ENCODE measurements at regions of chr14 and their contacts with region 1.

Region 1: GRCh38 chr14:22556990-22557623 is 31.9 kb downstream of the DAD1 start:
- DNase-seq: peak; percentile 83 to 93
- ATAC-seq: peak; percentile 89 to 97 (median 94)
- H3K4me3 ChIP-seq: peak overlapping the region; percentile 53
- H3K27ac ChIP-seq: peak overlapping the region; percentile 13
- H3K4me1 ChIP-seq: peaks cover 8% of the 10 kb centered on the region
- H3K27me3 ChIP-seq: no peaks in the 10 kb centered on the region
- CTCF ChIP-seq: peak; percentile 97

Region 2: DNA sequence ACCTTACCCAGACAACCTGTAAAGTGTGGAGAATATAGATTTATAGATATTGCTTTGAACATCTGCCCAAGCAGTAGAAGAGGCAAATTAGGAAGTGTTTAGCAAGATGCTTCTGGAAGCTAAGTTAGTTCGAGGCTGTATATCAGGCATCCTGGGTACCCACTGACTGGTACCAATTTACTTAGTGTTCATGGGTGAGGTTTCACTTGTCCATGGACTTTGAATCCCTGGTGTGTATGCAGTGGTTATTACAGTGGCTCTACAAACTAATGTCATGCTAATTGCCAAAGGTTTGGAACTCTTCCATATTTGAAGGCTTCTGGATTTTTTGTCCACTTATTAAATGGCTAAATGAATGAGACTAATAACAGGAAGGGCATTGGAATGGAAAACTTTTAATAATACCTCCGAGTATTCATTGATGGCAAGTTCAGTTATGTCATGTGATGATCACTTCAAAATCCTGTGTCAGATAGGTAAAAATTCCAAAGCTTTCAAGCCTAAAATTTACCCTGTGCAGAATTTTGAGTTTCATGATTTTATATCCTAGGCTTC is 903.7 kb before region 1 on chr14 and contains the start of gene OR4E2:
- intact Hi-C with region 1: no loop called
- DNase-seq: no peak
- ATAC-seq: no peak
- H3K4me3 ChIP-seq: no peak within 1 kb of the TSS
- H3K27ac ChIP-seq: no peak within 1 kb of the TSS
- H3K4me1 ChIP-seq: no peaks in the 10 kb centered on the region
- H3K27me3 ChIP-seq: no peaks in the 10 kb centered on the region
- CTCF ChIP-seq: no peak
- total RNA-seq, gene OR4E2: not detected

Region 3: DNA sequence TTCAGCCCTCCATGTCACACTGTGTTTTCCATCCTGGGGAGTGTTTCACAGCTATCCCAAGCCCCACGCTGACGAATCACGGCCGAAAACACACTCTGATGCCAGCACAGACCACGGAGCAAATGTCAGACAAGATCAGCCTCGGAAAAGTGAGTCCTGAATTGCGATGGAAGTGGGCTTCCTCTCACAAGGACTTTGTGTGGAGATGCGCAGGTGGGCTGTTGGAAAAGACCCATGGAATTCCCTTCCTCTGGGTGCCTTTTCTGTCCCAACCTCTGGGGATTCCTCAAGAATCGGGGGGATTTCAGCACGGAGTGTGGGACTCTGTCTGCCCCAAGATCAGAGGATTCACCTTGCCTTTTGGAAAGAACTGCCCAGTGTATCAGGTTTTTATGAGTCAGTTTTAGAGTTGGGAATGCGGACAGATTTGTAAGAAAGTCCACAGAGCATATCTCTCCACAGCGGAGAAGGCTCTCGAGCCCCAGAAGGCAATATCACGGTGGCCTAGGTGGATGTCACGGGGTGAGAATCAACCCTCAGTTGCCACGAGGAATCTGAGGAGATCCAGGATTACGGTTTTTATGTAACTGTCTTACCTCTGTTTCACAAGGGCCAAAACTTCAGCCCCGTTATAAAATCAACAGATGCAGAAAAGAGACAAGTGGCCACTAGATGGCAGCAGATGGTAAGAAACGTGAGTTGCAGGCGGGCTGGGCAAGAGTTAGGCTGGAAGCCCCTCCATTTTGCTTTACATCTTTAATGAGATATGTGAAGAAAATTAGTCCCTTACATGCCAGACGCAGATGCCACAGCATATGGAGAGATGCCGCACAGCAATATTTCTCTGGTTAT is 170.0 kb before region 1 on chr14:
- intact Hi-C with region 1: loop called in 1 of 2 experiments (anchors 5 kb)
- DNase-seq: peak in 1 of 2 donors; percentile 38
- ATAC-seq: peak in 3 of 4 donors; percentile 55 to 71 (median 65)
- H3K4me3 ChIP-seq: no peak overlapping the region
- H3K27ac ChIP-seq: no peak overlapping the region
- H3K4me1 ChIP-seq: no peaks in the 10 kb centered on the region
- H3K27me3 ChIP-seq: peaks cover 0 to 13% (median 0%) of the 10 kb centered on the region in 3 donors
- CTCF ChIP-seq: peak; percentile 85

Region 4: DNA sequence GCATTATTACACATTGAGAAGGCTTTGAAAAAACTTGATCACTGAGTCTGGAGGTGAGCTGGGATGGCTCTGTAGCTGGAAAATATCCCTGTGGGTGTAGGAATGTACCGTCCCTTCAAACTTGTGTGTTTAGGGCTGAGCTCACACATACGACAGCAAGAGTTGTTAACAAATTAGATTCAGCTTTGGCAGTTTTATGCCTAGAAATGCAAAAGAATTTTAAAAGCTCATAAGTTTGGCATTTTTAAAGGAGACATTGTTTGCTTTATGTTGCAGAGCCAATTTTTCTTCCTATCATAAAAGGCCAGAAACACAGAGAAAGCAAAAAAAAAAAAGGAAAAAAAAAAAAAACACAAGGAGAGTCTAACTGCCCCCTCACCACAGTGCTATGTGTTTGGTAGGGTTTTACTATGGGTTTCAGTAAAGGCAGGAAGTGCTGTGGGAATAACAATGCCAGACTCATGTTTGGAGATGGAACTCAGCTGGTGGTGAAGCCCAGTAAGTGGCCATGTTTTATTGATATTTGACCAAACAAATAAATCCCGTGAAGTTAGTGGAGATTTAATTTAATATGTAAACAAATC is 46.5 kb before region 1 on chr14:
- intact Hi-C with region 1: no loop called
- DNase-seq: no peak
- ATAC-seq: no peak
- H3K4me3 ChIP-seq: no peak overlapping the region
- H3K27ac ChIP-seq: no peak overlapping the region
- H3K4me1 ChIP-seq: peaks cover 13% of the 10 kb centered on the region
- H3K27me3 ChIP-seq: peaks cover 0 to 5% (median 2%) of the 10 kb centered on the region in 3 donors
- CTCF ChIP-seq: no peak

Region 5: DNA sequence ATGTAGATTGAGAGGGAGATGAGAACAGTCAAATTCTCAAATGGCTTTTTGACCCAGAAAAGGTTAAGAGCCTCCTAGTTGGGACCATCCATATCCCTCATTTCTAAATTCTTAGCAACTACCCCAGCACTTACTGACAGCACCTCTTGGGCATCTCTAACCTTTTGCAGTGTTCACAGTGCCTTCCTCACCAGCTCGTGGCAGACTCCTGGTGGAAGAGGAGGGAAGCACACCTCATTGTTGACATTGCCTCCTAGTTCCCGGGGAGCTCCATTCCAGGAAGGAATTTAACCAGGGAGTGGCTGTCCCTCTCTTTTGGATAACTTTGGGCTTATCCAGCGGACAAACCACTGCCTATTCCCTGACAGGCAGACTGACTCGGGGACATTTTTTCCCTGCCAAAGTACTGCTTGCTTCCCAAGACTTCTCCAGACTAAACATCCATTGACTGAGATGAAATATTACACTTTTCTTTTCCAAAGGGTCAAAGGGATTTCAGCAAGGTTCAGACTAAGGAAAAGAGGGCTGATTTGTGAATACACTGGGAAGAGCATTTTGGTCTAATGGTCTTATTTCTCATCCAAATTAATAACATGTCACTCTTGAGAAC is 96.0 kb after region 1 on chr14:
- intact Hi-C with region 1: loop called (anchors 5 kb)
- DNase-seq: peak; percentile 29 to 57
- ATAC-seq: peak; percentile 55 to 85 (median 82)
- H3K4me3 ChIP-seq: no peak overlapping the region
- H3K27ac ChIP-seq: no peak overlapping the region
- H3K4me1 ChIP-seq: peaks cover 16% of the 10 kb centered on the region
- H3K27me3 ChIP-seq: no peaks in the 10 kb centered on the region
- CTCF ChIP-seq: peak; percentile 77

Region 6: GRCh38 chr14:22822571-22823098 is 265.5 kb after region 1 on chr14:
- intact Hi-C with region 1: loop called (anchors 5 kb)
- DNase-seq: peak; percentile 81 to 85
- ATAC-seq: peak; percentile 83 to 95 (median 86)
- H3K4me3 ChIP-seq: peak overlapping the region; percentile 41
- H3K27ac ChIP-seq: no peak overlapping the region
- H3K4me1 ChIP-seq: no peaks in the 10 kb centered on the region
- H3K27me3 ChIP-seq: peaks cover 0 to 2% (median 0%) of the 10 kb centered on the region in 3 donors
- CTCF ChIP-seq: peak; percentile 83

Region 7: DNA sequence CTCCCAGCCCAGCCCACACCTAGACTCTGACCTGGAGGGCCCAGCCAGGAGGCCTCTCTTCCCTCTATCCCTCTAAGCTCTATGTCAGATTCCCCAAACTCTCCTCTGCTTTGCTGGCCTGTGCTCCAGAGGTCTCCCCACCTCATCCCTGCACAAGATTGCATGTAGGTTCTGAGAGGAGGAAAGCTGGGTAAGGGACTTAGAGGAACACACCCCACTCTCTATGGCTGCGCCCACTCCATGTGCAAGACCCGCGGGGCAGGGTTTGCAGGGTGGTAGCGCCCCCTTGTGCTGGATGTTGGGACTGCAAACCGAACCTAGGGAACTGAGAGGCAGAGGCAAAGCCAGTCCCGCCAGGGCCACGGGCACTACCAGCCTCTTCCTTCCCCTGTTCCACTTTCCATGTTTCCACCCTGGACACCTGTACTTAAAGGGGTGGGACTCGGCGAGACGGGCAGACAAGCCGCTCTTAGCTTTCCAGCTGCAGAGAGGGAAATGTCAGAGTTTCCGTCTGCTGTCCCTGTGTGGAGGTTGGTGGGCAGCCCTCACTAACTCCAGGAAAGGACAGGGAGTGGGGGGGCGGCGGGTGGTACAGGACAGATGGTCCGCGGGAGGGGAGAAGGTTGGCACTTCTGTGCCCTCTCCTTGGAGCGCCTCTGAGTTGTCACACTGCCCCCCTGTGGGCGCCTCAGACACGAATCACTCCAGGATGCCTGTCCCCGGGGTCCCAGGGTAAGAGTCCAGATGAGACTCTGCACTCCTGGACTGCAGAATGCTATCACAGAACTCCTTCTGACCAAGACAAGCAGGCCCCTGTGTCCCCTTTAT is 296.0 kb after region 1 on chr14:
- intact Hi-C with region 1: loop called (anchors 1 to 5 kb)
- DNase-seq: peak; percentile 88 to 93
- ATAC-seq: peak; percentile 70 to 81 (median 73)
- H3K4me3 ChIP-seq: peak overlapping the region; percentile 68
- H3K27ac ChIP-seq: no peak overlapping the region
- H3K4me1 ChIP-seq: peaks cover 47% of the 10 kb centered on the region
- H3K27me3 ChIP-seq: no peaks in the 10 kb centered on the region
- CTCF ChIP-seq: peak; percentile 89

Region 8: DNA sequence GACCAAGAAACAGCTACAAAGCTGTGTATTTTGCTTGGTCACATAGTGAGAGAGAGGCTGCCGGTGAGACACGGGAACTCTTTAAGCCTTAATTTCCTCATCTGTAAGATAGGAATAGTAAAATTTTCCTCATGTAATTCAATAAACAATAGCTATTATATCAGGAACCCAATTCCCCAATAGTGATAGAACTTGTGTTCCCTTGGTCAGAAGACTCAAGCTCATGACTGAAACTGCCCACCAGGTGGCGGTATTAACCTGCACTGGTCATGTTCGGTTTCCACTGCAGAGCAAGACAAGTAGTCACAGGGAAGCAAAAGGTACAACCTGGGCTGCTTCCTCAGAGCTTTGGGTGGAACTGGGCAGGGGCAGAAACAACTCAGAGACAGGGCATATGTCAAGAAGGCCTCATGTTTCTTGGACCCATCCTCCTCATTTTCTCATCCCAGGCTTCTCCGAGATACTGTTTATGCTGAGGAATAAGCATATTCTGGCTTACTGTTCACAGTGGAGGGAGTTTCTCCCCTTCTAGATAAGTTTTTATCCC is 429.5 kb after region 1 on chr14:
- intact Hi-C with region 1: loop called in 1 of 2 experiments (anchors 5 kb)
- DNase-seq: peak; percentile 85 to 89
- ATAC-seq: peak; percentile 75 to 81 (median 77)
- H3K4me3 ChIP-seq: no peak overlapping the region
- H3K27ac ChIP-seq: no peak overlapping the region
- H3K4me1 ChIP-seq: peaks cover 8% of the 10 kb centered on the region
- H3K27me3 ChIP-seq: peaks cover 0 to 14% (median 6%) of the 10 kb centered on the region in 3 donors
- CTCF ChIP-seq: peak; percentile 94

Region 9: GRCh38 chr14:23057757-23058653 is 500.9 kb after region 1 on chr14:
- intact Hi-C with region 1: loop called in 1 of 2 experiments (anchors 5 kb)
- DNase-seq: peak; percentile 81 to 92
- ATAC-seq: peak; percentile 76 to 86 (median 82)
- H3K4me3 ChIP-seq: peak overlapping the region; percentile 78
- H3K27ac ChIP-seq: peak overlapping the region; percentile 32
- H3K4me1 ChIP-seq: peaks cover 12% of the 10 kb centered on the region
- H3K27me3 ChIP-seq: no peaks in the 10 kb centered on the region
- CTCF ChIP-seq: peak; percentile 93